Activated T-helper 1 cell treated with anti-CD3 and anti-CD28 coated beads, Interleukin-12 subunit alpha, Interleukin-12 subunit beta, Interleukin-2, Interleukin-4 antibody, amounts not matched to agents 30 ng/mL and 10 ng/mL and 1 ng/mL, durations not matched to agents 14 hours and 24 hours and 36 hours (primary cell): ENCODE measurements at regions of chrX and their contacts with region 1.

Region 1: GRCh38 chrX:56563231-56564161 is at the start of gene UBQLN2:
- DNase-seq: peak; percentile 67
- H3K4me3 Mint-ChIP-seq: peak within 1 kb of the TSS; percentile 88
- H3K27ac Mint-ChIP-seq: peak within 1 kb of the TSS; percentile 97
- H3K4me1 Mint-ChIP-seq: peaks cover 12% of the 10 kb centered on the region
- H3K27me3 Mint-ChIP-seq: no peaks in the 10 kb centered on the region
- total RNA-seq, gene UBQLN2: 38.3 and 41.3 TPM in 2 replicates

Region 2: DNA sequence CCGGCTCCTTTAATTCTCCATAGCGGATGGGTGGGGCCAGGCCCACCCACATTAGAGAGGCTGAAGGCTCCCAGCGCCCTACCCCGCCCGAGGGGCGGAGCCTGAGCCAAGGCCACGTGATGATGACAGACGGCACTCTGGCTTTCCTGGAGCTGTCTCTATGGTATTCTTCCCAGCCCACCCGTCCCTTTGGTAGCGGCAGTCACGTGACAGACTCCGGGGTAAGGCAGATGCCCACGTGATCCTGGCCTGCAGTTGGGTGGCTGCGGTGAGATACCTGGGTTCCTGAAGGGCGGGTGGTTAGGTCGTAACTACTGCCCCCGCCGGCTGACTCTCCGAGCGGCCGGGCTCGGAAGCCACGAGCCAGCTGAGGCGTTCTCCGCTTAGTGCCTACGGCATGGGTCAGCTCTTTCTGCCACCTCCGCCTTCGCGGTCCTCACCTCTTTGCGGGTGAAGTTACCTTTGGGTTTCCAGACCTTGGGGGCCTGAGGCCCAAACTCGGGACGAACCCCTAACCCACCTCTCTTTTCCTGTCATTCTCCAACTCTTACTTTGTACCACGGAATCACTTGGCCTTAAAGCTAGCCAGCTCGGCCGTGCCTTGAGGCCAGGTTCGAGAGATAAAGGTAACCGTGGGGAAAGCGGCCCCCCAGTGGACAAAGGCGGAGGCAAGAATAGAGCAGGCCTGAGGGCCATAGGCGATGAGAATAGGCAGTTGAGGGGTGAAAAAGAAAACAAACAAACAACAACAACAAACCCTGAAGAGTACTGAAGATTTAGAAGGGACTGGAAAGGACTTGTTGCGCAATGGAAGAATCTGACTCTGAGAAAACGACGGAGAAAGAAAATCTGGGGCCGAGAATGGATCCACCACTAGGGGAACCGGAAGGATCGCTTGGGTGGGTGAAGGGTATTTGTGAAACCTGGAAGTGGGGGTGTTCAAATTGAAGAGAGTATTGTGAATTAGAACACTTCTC is 845.7 kb before region 1 on chrX and contains the start of gene RRAGB:
- intact Hi-C with region 1: loop called (anchors 2 kb)
- DNase-seq: peak; percentile 84
- H3K4me3 Mint-ChIP-seq: peak within 1 kb of the TSS; percentile 89
- H3K27ac Mint-ChIP-seq: peak within 1 kb of the TSS; percentile 73
- H3K4me1 Mint-ChIP-seq: peaks cover 36% of the 10 kb centered on the region
- H3K27me3 Mint-ChIP-seq: no peaks in the 10 kb centered on the region
- total RNA-seq, gene RRAGB: 4.4 and 6.1 TPM in 2 replicates

Region 3: GRCh38 chrX:56281789-56282188 is 281.7 kb before region 1 on chrX:
- intact Hi-C with region 1: loop called (anchors 2 kb)
- DNase-seq: peak; percentile 1
- H3K4me3 Mint-ChIP-seq: no peak overlapping the region
- H3K27ac Mint-ChIP-seq: no peak overlapping the region
- H3K4me1 Mint-ChIP-seq: peaks cover 11% of the 10 kb centered on the region
- H3K27me3 Mint-ChIP-seq: no peaks in the 10 kb centered on the region

Region 4: GRCh38 chrX:56366901-56367300 is 196.6 kb before region 1 on chrX:
- intact Hi-C with region 1: loop called (anchors 1 kb)
- DNase-seq: no peak
- H3K4me3 Mint-ChIP-seq: no peak overlapping the region
- H3K27ac Mint-ChIP-seq: no peak overlapping the region
- H3K4me1 Mint-ChIP-seq: peaks cover 56% of the 10 kb centered on the region
- H3K27me3 Mint-ChIP-seq: no peaks in the 10 kb centered on the region

Region 5: DNA sequence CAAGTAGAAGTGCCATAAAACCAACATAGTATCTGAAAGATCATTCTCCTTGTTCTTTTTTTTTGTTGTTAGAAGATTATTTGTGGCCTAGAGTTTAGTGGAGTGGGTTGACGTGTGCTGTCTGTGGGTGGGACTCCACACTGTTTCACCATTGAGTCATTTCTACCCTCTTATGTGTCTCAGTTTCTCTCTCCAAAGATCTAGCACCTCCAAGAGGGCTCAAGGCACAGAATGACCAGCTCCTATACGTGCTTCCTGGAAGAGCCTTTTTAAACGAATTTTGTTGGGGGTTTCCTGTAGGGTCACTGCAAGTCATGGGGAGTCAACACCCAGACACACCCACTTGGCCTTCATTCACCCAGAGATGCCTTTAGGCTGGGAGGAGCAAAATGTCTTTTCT is 181.2 kb before region 1 on chrX:
- intact Hi-C with region 1: loop called (anchors 2 kb)
- DNase-seq: peak; percentile 8
- H3K4me3 Mint-ChIP-seq: peak overlapping the region; percentile 58
- H3K27ac Mint-ChIP-seq: peak overlapping the region; percentile 88
- H3K4me1 Mint-ChIP-seq: peaks cover 38% of the 10 kb centered on the region
- H3K27me3 Mint-ChIP-seq: no peaks in the 10 kb centered on the region

Region 6: GRCh38 chrX:56397636-56398035 is 165.9 kb before region 1 on chrX:
- intact Hi-C with region 1: loop called (anchors 5 kb)
- DNase-seq: peak; percentile 2
- H3K4me3 Mint-ChIP-seq: peak overlapping the region; percentile 66
- H3K27ac Mint-ChIP-seq: peak overlapping the region; percentile 83
- H3K4me1 Mint-ChIP-seq: peaks cover 45% of the 10 kb centered on the region
- H3K27me3 Mint-ChIP-seq: no peaks in the 10 kb centered on the region

Region 7: DNA sequence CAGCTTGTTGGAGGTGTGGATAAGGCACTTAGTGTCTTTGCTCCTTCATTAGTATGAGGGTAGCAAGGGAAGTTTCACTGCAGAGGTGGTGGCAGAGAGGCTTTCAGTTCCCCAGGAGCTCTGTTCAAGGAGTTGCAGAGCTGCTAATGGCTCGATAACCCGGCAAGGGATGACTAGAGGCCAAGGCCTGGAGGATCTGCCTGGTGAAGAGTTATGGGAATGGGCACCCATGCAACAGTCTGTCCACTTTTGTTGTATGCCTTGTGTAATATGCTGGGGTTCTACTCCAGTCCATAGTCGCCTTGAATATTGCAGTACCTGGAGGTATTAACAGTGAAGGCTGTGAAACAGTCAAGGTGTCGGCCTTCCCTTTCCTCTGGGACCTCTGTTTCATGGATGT is 97.7 kb after region 1 on chrX:
- intact Hi-C with region 1: no loop called
- DNase-seq: no peak
- H3K4me3 Mint-ChIP-seq: no peak overlapping the region
- H3K27ac Mint-ChIP-seq: no peak overlapping the region
- H3K4me1 Mint-ChIP-seq: no peaks in the 10 kb centered on the region
- H3K27me3 Mint-ChIP-seq: no peaks in the 10 kb centered on the region

Region 8: DNA sequence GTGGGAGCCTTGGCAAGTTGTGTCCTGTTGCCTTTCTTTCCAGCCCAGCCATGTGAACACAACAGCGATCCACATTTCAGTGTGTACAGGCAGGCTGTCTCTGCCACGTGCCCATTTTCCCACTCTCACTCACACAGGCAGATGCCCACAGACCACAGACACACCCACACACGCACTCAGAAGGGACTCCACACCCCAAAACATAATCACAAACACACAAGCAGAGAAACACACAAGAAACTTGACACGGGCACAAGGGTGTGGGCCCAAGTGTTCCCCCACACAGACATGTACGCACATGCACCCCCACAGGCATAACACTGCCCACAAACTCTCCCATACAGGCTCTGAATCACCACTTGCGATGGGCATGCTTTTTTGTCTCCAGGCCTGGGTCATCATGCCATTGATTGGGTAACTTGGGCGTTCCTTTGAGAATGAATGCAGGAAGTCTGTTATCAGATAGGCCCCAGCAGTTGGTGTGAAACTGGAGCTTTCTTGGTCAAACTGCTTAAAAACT is 249.9 kb after region 1 on chrX:
- intact Hi-C with region 1: loop called (anchors 2 kb)
- DNase-seq: peak; percentile 32
- H3K4me3 Mint-ChIP-seq: peak overlapping the region; percentile 80
- H3K27ac Mint-ChIP-seq: peak overlapping the region; percentile 97
- H3K4me1 Mint-ChIP-seq: peaks cover 38% of the 10 kb centered on the region
- H3K27me3 Mint-ChIP-seq: no peaks in the 10 kb centered on the region